Endothelial cell of umbilical vein (primary cell): ENCODE measurements at regions of chr7 and their contacts with region 1.

Region 1: GRCh38 chr7:39580149-39580874 is 14.1 kb downstream of the YAE1 start:
- DNase-seq: peak; percentile 94
- H3K4me3 ChIP-seq: no peak overlapping the region
- H3K27ac ChIP-seq: peak overlapping the region; percentile 1
- H3K4me1 ChIP-seq: no peaks in the 10 kb centered on the region
- H3K27me3 ChIP-seq: no peaks in the 10 kb centered on the region
- CTCF ChIP-seq: peak; percentile 74
- POLR2A ChIP-seq: no peak

Region 2: GRCh38 chr7:39488467-39489393 is 91.6 kb before region 1 on chr7:
- CTCF ChIA-PET with region 1: no interaction called
- POLR2A ChIA-PET with region 1: no interaction called
- dilution Hi-C with region 1: no loop called
- intact Hi-C with region 1: no loop called
- DNase-seq: no peak
- H3K4me3 ChIP-seq: no peak overlapping the region
- H3K27ac ChIP-seq: no peak overlapping the region
- H3K4me1 ChIP-seq: no peaks in the 10 kb centered on the region
- H3K27me3 ChIP-seq: peaks cover 3 to 4% of the 10 kb centered on the region in 2 experiments
- CTCF ChIP-seq: no peak
- POLR2A ChIP-seq: no peak

Region 3: GRCh38 chr7:39517240-39517639 is 63.1 kb before region 1 on chr7:
- CTCF ChIA-PET with region 1: no interaction called
- POLR2A ChIA-PET with region 1: no interaction called
- dilution Hi-C with region 1: no loop called
- intact Hi-C with region 1: no loop called
- DNase-seq: no peak
- H3K4me3 ChIP-seq: no peak overlapping the region
- H3K27ac ChIP-seq: no peak overlapping the region
- H3K4me1 ChIP-seq: no peaks in the 10 kb centered on the region
- H3K27me3 ChIP-seq: peaks cover 2 to 3% of the 10 kb centered on the region in 2 experiments
- CTCF ChIP-seq: no peak
- POLR2A ChIP-seq: no peak

Region 4: DNA sequence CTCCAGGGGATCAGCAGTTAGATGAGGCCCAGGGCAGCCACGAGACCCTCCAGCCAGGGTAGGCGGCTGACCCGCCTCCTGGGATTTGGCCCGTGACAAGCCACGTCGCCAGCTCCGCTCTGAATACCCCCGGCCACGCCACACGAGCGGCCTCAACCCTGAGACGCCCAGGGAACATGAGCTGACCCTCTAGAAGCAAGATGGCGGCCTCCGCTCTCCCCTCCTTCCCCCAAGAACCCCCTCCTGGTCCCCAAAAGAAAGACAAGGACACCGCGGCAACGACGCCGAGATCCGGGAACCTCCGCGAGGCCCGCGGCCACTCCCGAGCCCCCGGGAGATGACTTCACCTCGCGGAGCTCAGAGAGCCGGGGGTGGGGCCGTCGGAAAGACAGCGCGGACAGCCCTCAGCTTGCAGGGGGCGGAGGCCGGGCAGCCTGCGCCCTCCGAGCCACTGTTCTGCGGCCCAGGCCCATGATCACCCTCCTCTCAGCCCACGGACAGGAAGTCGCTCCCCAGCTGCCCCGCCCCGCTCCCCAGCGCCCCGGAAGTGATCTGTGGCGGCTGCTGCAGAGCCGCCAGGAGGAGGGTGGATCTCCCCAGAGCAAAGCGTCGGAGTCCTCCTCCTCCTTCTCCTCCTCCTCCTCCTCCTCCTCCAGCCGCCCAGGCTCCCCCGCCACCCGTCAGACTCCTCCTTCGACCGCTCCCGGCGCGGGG is 42.9 kb after region 1 on chr7 and contains the start of gene RALA:
- CTCF ChIA-PET with region 1: interaction called, 138 read pairs
- POLR2A ChIA-PET with region 1: interaction called, 7 read pairs
- dilution Hi-C with region 1: no loop called
- intact Hi-C with region 1: loop called (anchors 1 kb)
- DNase-seq: peak; percentile 87
- H3K4me3 ChIP-seq: peak within 1 kb of the TSS; percentile 80 to 98 (median 90)
- H3K27ac ChIP-seq: peak within 1 kb of the TSS; percentile 87
- H3K4me1 ChIP-seq: peaks cover 32% of the 10 kb centered on the region
- H3K27me3 ChIP-seq: no peaks in the 10 kb centered on the region
- CTCF ChIP-seq: no peak
- POLR2A ChIP-seq: peak; percentile 75
- total RNA-seq, gene RALA: 181 and 191 TPM in 2 replicates

Region 5: GRCh38 chr7:39650676-39651075 is 70.4 kb after region 1 on chr7:
- CTCF ChIA-PET with region 1: interaction called, 18 read pairs
- POLR2A ChIA-PET with region 1: interaction called, 3 read pairs
- dilution Hi-C with region 1: no loop called
- intact Hi-C with region 1: loop called (anchors 2 kb)
- DNase-seq: peak; percentile 26
- H3K4me3 ChIP-seq: no peak overlapping the region
- H3K27ac ChIP-seq: no peak overlapping the region
- H3K4me1 ChIP-seq: peaks cover 10% of the 10 kb centered on the region
- H3K27me3 ChIP-seq: no peaks in the 10 kb centered on the region
- CTCF ChIP-seq: no peak
- POLR2A ChIP-seq: no peak

Region 6: GRCh38 chr7:39678930-39679709 is 98.8 kb after region 1 on chr7:
- CTCF ChIA-PET with region 1: interaction called, 23 read pairs
- POLR2A ChIA-PET with region 1: interaction called, 6 read pairs
- dilution Hi-C with region 1: no loop called
- intact Hi-C with region 1: no loop called
- DNase-seq: peak; percentile 35
- H3K4me3 ChIP-seq: no peak overlapping the region
- H3K27ac ChIP-seq: peak overlapping the region; percentile 37
- H3K4me1 ChIP-seq: peaks cover 45% of the 10 kb centered on the region
- H3K27me3 ChIP-seq: no peaks in the 10 kb centered on the region
- CTCF ChIP-seq: no peak
- POLR2A ChIP-seq: no peak

Region 7: GRCh38 chr7:39709768-39710311 is 129.5 kb after region 1 on chr7:
- CTCF ChIA-PET with region 1: interaction called, 25 read pairs
- POLR2A ChIA-PET with region 1: interaction called, 4 read pairs
- dilution Hi-C with region 1: no loop called
- intact Hi-C with region 1: no loop called
- DNase-seq: peak; percentile 61
- H3K4me3 ChIP-seq: no peak overlapping the region
- H3K27ac ChIP-seq: no peak overlapping the region
- H3K4me1 ChIP-seq: peaks cover 8% of the 10 kb centered on the region
- H3K27me3 ChIP-seq: no peaks in the 10 kb centered on the region
- CTCF ChIP-seq: no peak
- POLR2A ChIP-seq: peak; percentile 64

Region 8: GRCh38 chr7:39894904-39895303 is 314.6 kb after region 1 on chr7:
- CTCF ChIA-PET with region 1: interaction called, 31 read pairs
- POLR2A ChIA-PET with region 1: no interaction called
- dilution Hi-C with region 1: no loop called
- intact Hi-C with region 1: loop called (anchors 2 kb)
- DNase-seq: peak; percentile 19
- H3K4me3 ChIP-seq: no peak overlapping the region
- H3K27ac ChIP-seq: no peak overlapping the region
- H3K4me1 ChIP-seq: no peaks in the 10 kb centered on the region
- H3K27me3 ChIP-seq: peaks cover 22 to 28% of the 10 kb centered on the region in 2 experiments
- CTCF ChIP-seq: no peak
- POLR2A ChIP-seq: no peak